MCF 10A (cell line): ENCODE measurements at regions of chr18 and their contacts with region 1.

Region 1: DNA sequence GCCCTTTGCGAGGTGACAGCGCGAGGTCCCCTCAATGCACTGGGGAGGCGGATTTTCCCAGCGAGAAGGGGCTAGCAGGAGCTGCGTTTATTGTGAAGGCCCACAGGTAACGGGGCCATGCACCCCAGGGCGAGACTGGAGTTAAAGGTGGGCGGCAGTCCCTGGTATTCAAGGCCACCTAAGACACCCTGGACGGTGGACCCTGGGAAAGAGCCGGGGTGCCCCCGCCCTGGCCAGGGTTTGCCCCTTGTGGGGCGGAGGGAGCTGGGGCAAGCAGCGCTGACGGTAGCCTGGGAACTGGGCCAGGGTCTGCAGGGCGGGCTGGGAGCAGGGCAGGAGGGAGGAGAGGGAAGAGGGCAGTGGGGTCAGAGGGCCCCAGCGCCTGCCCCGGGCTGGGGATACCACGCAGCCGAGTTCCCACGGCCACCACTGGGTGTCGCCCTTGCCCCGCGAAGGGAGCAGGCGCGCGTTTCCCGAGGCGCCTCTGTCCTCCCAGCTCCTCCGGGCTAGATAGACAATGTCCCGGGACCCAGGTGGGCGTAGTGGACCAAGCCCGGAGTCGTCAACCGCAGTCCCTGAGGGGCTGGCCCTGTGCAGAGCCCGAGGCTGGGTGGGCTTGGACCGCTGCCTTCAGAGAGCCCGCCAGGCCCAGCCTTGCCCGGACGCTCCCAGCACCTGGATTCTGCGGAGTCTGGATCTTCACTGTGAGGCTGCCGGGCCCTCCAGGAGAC is 80.2 kb downstream of the SMAD4 start:
- DNase-seq: peak; percentile 57
- H3K4me3 Mint-ChIP-seq: no peak overlapping the region
- H3K27ac Mint-ChIP-seq: no peak overlapping the region
- H3K4me1 Mint-ChIP-seq: no peaks in the 10 kb centered on the region
- H3K27me3 Mint-ChIP-seq: no peaks in the 10 kb centered on the region
- CTCF ChIP-seq: peak; percentile 99

Region 2: GRCh38 chr18:51074605-51075004 is 35.6 kb before region 1 on chr18:
- CTCF ChIA-PET with region 1: no interaction called
- POLR2A ChIA-PET with region 1: no interaction called
- intact Hi-C with region 1: no loop called
- DNase-seq: no peak
- H3K4me3 Mint-ChIP-seq: no peak overlapping the region
- H3K27ac Mint-ChIP-seq: no peak overlapping the region
- H3K4me1 Mint-ChIP-seq: peaks cover 12% of the 10 kb centered on the region
- H3K27me3 Mint-ChIP-seq: no peaks in the 10 kb centered on the region
- CTCF ChIP-seq: no peak

Region 3: DNA sequence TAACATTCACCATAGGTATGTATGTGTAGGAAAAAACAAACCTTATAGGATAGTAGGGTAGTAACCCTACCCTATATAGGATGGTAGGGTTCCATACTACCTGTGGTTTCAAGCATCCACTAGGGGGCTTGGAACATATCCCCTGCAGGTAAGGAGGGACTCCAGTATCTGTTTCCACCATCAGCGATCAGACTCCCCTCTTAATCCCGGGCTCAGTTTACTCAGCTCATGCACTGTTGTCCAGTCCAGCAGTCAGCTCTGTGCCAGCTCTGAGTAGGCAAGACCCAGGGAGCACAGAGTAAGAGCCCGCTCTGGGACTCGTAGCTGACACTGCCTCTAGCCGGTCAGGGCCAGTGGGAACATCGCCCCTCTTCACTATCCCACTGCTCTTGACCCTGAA is 25.6 kb after region 1 on chr18:
- CTCF ChIA-PET with region 1: interaction called, 11 read pairs
- POLR2A ChIA-PET with region 1: interaction called, 6 read pairs
- intact Hi-C with region 1: no loop called
- DNase-seq: peak; percentile 48
- H3K4me3 Mint-ChIP-seq: peak overlapping the region; percentile 85
- H3K27ac Mint-ChIP-seq: peak overlapping the region; percentile 97
- H3K4me1 Mint-ChIP-seq: peaks cover 45% of the 10 kb centered on the region
- H3K27me3 Mint-ChIP-seq: no peaks in the 10 kb centered on the region
- CTCF ChIP-seq: no peak

Region 4: DNA sequence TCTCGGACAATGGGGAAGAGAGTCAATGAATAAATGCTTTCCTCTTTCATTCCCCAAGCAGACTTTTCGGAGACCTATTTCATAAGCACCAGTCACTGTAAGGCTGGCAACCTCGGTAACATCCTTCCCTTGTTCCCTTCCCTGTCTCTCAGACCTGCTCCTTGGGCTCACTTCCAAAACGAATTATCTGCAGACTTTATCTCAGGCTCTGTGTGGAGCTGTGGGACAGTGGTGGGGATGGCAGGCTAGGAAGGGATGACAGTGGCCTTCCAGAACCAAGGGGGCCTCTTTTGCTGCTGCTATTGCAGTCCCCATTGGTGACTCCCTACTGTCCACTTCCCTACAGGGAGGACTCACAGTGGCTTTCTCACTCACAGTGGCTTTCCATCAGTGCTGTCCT is 272.9 kb after region 1 on chr18:
- CTCF ChIA-PET with region 1: interaction called, 6 read pairs
- POLR2A ChIA-PET with region 1: no interaction called
- intact Hi-C with region 1: loop called (anchors 10 kb)
- DNase-seq: no peak
- H3K4me3 Mint-ChIP-seq: no peak overlapping the region
- H3K27ac Mint-ChIP-seq: no peak overlapping the region
- H3K4me1 Mint-ChIP-seq: peaks cover 4% of the 10 kb centered on the region
- H3K27me3 Mint-ChIP-seq: no peaks in the 10 kb centered on the region
- CTCF ChIP-seq: no peak

Region 5: DNA sequence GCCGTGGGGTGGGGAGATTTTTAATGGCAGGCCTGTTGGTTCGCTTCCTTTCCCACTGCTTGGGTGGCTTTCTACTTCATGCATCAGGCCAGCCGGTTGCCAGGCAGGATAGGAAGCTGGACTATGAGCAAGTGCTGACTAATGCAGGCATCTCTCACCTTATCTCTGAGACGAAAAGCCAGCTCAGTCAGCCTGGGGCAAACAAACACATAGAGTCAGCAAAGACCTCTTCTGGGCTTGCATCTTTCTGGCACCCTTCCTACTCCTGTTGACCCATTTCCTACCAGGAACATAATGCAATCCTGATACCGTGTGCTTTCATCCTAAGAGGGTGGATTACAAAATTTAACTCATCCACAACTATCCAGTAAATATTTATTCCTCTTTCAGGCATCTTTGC is 503.8 kb after region 1 on chr18:
- CTCF ChIA-PET with region 1: interaction called, 7 read pairs
- POLR2A ChIA-PET with region 1: no interaction called
- intact Hi-C with region 1: loop called (anchors 5 kb)
- DNase-seq: peak; percentile 99
- H3K4me3 Mint-ChIP-seq: no peak overlapping the region
- H3K27ac Mint-ChIP-seq: peak overlapping the region; percentile 75
- H3K4me1 Mint-ChIP-seq: peaks cover 45% of the 10 kb centered on the region
- H3K27me3 Mint-ChIP-seq: no peaks in the 10 kb centered on the region
- CTCF ChIP-seq: no peak

Region 6: DNA sequence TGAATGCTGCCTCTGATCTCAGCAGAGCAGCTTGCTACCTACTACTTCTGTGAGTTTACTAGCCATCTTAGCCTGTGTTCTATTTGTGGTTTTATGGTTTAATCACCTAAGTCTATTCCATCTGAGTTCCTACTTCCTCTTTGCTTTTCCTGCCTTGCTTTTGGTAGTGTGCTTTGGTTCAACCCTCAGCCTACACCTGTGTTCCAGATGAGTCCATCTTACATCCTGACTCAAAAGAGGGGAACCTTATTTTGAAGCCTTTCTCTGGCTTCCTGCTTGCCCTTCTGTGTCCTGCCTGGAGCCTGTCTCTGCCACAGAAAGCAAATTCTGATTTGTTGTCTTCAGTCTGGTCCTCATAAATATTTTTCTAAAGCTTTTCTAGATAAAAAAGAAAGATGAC is 617.5 kb after region 1 on chr18:
- CTCF ChIA-PET with region 1: no interaction called
- POLR2A ChIA-PET with region 1: no interaction called
- intact Hi-C with region 1: loop called (anchors 10 kb)
- DNase-seq: no peak
- H3K4me3 Mint-ChIP-seq: no peak overlapping the region
- H3K27ac Mint-ChIP-seq: no peak overlapping the region
- H3K4me1 Mint-ChIP-seq: no peaks in the 10 kb centered on the region
- H3K27me3 Mint-ChIP-seq: peaks cover 14% of the 10 kb centered on the region
- CTCF ChIP-seq: no peak